ENCODE measurements at regions of chr16 and their contacts with region 1.

Region 1: DNA sequence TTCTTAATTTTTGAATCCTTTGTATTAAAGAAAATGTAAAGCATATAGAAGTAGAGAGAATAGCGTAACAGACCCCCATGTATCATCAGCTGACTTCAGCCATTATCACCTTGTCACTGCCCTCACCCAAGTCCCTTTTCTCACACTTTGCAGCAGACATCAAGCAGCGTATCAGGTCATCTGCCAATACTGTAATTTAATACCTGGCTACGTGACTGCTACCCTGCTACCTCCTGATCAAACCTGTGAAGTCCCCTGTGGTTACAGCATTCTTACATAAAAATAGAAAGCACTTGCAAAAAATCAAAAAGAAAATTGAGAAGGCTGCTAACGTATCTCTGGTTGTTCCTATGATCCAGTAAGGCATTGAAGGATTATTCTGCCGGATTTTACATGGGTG is 96.4 kb downstream of the PLCG2 start:
- DNase-seq: no peak
- ATAC-seq: no peak
- H3K4me3 ChIP-seq: no peak overlapping the region
- H3K4me3 Mint-ChIP-seq: no peak overlapping the region
- H3K27ac ChIP-seq: no peak overlapping the region
- H3K27ac Mint-ChIP-seq: no peak overlapping the region
- H3K4me1 ChIP-seq: peaks cover 0 to 12% of the 10 kb centered on the region in 2 experiments
- H3K4me1 Mint-ChIP-seq: peaks cover 0 to 16% (median 13%) of the 10 kb centered on the region in 3 donors
- H3K27me3 ChIP-seq: no peaks in the 10 kb centered on the region
- H3K27me3 Mint-ChIP-seq: peaks cover 0 to 5% of the 10 kb centered on the region in 2 donors

Region 2: DNA sequence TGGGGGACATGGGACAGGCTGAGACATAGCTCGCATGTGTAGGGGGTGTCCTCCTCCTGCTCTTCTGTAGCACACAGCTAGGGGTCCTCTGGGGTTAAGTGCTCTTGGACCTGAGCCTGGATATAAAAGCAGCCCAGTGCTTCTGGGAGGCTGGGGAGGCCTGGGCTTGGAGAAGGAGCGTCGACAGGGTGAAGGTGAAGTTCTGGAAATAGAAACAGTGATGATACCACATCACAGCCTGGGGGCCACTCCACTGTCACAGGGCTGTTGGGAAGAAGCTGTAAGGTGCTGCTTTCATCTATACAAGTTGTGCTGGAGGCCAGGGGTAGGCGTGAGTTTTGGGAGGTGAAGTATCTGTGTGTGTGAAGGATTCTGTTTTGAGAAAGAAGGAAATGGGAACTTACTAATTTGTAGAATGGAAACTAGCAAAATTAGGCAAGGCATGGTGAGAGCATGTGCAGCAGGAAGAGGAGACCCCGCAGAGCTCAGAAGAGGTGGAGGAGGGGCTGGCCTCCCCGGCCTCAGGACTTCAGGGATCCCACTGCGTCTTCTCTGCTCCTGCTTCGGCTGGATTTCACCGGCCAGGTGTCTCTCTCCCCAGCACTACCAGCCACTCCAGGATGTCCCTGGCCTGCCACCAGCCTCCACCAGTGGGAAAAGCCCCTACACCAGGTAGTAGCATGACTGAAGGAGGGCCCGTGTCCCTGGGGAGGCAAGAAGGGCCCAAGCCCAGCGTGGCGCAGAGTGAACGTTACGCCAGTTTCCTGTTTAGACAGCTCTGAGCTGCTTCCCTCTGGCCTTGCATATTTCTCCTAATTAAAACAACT is 76.9 kb before region 1 on chr16:
- CTCF ChIA-PET with region 1: no interaction called
- POLR2A ChIA-PET with region 1: no interaction called
- DNase-seq: peak in 3 of 35 experiments; percentile 8 to 38 (median 29)
- ATAC-seq: peak in 2 of 4 experiments; percentile 54 to 59
- H3K4me3 ChIP-seq: no peak overlapping the region
- H3K4me3 Mint-ChIP-seq: peak overlapping the region in 2 of 3 donors; percentile 1 to 2
- H3K27ac ChIP-seq: peak overlapping the region; percentile 55
- H3K27ac Mint-ChIP-seq: peak overlapping the region; percentile 38 to 75
- H3K4me1 ChIP-seq: peaks cover 0 to 28% of the 10 kb centered on the region in 2 experiments
- H3K4me1 Mint-ChIP-seq: peaks cover 0 to 28% (median 9%) of the 10 kb centered on the region in 3 donors
- H3K27me3 ChIP-seq: no peaks in the 10 kb centered on the region
- H3K27me3 Mint-ChIP-seq: no peaks in the 10 kb centered on the region

Region 3: GRCh38 chr16:81823111-81823510 is 52.4 kb before region 1 on chr16:
- CTCF ChIA-PET with region 1: no interaction called
- POLR2A ChIA-PET with region 1: no interaction called
- DNase-seq: peak in 2 of 35 experiments; percentile 23 to 46
- ATAC-seq: peak in 3 of 4 experiments; percentile 38 to 45 (median 40)
- H3K4me3 ChIP-seq: no peak overlapping the region
- H3K4me3 Mint-ChIP-seq: no peak overlapping the region
- H3K27ac ChIP-seq: peak overlapping the region; percentile 62
- H3K27ac Mint-ChIP-seq: peak overlapping the region; percentile 51 to 61
- H3K4me1 ChIP-seq: peaks cover 0 to 35% of the 10 kb centered on the region in 2 experiments
- H3K4me1 Mint-ChIP-seq: peaks cover 3 to 39% (median 5%) of the 10 kb centered on the region in 3 donors
- H3K27me3 ChIP-seq: peaks cover 0 to 3% of the 10 kb centered on the region in 2 experiments
- H3K27me3 Mint-ChIP-seq: peaks cover 0 to 4% of the 10 kb centered on the region in 2 donors

Region 4: DNA sequence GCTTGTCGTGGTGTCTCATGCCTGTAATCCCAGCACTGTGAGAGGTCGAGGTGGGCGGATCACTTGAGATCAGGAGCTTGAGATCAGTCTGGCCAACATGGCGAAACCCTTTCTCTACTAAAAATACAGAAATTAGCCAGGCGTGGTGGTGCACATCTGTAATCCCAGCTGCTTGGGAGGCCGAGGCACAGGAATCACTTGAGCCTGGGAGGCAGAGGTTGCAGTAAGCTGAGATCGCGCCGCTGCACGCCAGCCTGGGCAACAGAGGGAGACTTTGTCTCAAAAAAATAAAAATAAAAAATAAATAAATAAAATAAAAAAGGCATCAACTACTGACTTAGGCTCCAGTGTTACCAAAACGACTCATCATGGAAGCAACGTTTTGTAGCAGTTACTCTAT is 19.1 kb after region 1 on chr16:
- CTCF ChIA-PET with region 1: interaction called, 3 to 19 read pairs
- POLR2A ChIA-PET with region 1: no interaction called
- DNase-seq: no peak
- ATAC-seq: no peak
- H3K4me3 ChIP-seq: no peak overlapping the region
- H3K4me3 Mint-ChIP-seq: no peak overlapping the region
- H3K27ac ChIP-seq: no peak overlapping the region
- H3K27ac Mint-ChIP-seq: no peak overlapping the region
- H3K4me1 ChIP-seq: peaks cover 0 to 2% of the 10 kb centered on the region in 2 experiments
- H3K4me1 Mint-ChIP-seq: no peaks in the 10 kb centered on the region
- H3K27me3 ChIP-seq: no peaks in the 10 kb centered on the region
- H3K27me3 Mint-ChIP-seq: peaks cover 0 to 1% of the 10 kb centered on the region in 2 donors

Measured in T-cell (primary cell).